Breast epithelium (tissue), 4 donors: ENCODE measurements at regions of chr10 and their contacts with region 1.

Region 1: DNA sequence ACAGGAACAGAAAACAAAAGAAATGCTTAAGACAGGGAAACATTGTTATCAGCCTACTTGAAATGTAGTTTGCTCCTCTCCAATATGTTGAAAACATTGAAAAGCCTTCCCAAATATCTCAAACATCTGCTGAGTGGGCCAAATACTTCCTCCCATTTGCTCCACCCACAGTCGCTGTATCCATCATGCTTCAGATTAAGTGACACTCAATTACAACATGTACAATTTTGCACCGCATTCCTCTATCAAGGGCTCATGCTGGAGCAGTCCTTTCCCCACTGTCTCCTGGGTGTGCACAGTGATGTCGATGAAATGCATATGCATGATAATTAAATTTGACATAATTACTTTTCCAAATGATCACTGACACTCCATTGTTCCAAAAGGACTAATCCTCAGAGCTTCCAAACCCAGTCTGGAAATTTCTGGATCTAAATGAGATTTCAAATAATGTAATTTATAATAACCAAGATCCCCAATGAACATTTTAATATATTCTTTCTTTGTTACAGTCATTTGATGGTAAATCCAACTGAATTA is 604.6 kb downstream of the GRID1 start:
- DNase-seq: no peak
- H3K4me3 ChIP-seq: no peak overlapping the region
- H3K27ac ChIP-seq: no peak overlapping the region
- H3K4me1 ChIP-seq: no peaks in the 10 kb centered on the region
- H3K27me3 ChIP-seq: no peaks in the 10 kb centered on the region
- CTCF ChIP-seq: no peak
- POLR2A ChIP-seq: no peak

Region 2: DNA sequence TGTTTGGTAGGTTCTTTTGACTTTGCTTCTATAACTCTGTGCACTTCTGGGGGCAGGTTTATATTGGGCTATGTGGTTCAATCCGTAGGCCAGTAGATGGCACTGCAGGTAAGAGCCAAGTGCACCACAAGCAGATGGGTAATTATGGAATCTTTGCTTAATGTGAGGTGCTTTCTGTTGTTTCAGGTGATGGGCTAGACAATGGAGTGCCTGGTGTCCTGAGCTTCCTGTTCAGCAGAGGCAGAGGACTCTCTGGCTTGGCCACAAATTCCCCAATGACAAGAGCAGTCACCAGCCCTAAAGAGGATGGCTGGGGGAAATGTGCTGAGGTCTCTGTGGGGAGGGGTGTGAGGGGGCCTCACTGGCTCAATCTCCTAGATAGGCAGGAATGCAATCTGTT is 978.6 kb before region 1 on chr10:
- intact Hi-C with region 1: loop called (anchors 10 kb)
- DNase-seq: no peak
- H3K4me3 ChIP-seq: no peak overlapping the region
- H3K27ac ChIP-seq: no peak overlapping the region
- H3K4me1 ChIP-seq: no peaks in the 10 kb centered on the region
- H3K27me3 ChIP-seq: no peaks in the 10 kb centered on the region
- CTCF ChIP-seq: peak in 1 of 3 donors; percentile 46
- POLR2A ChIP-seq: no peak

Region 3: GRCh38 chr10:86244297-86245014 is 482.5 kb after region 1 on chr10:
- intact Hi-C with region 1: loop called (anchors 10 kb)
- DNase-seq: no peak
- H3K4me3 ChIP-seq: no peak overlapping the region
- H3K27ac ChIP-seq: no peak overlapping the region
- H3K4me1 ChIP-seq: no peaks in the 10 kb centered on the region
- H3K27me3 ChIP-seq: no peaks in the 10 kb centered on the region
- CTCF ChIP-seq: no peak
- POLR2A ChIP-seq: no peak